Dorsolateral prefrontal cortex (tissue), 120 donors: ENCODE measurements at regions of chr5 and their contacts with region 1.

Region 1: GRCh38 chr5:128905571-128906110 is 59.6 kb upstream of the SLC27A6 start:
- DNase-seq: peak in 1 of 10 donors; percentile 19
- H3K4me3 ChIP-seq: no peak overlapping the region
- H3K27ac ChIP-seq: no peak overlapping the region
- H3K27me3 ChIP-seq: peaks cover 0 to 9% (median 0%) of the 10 kb centered on the region in 45 donors
- CTCF ChIP-seq: peak; percentile 65 to 96 (median 83)

Region 2: GRCh38 chr5:129053438-129053837 is 147.8 kb after region 1 on chr5:
- intact Hi-C with region 1: loop called in 1 of 2 experiments (anchors 10 kb)
- DNase-seq: no peak
- H3K4me3 ChIP-seq: no peak overlapping the region
- H3K27ac ChIP-seq: no peak overlapping the region
- H3K27me3 ChIP-seq: peaks cover 0 to 3% (median 0%) of the 10 kb centered on the region in 45 donors
- CTCF ChIP-seq: peak in 42 of 56 donors; percentile 18 to 74 (median 38)

Region 3: GRCh38 chr5:129094087-129094923 is 188.7 kb after region 1 on chr5 and contains the start of gene ISOC1:
- intact Hi-C with region 1: loop called in 1 of 2 experiments (anchors 5 kb)
- DNase-seq: peak; percentile 47 to 93 (median 83)
- H3K4me3 ChIP-seq: peak within 1 kb of the TSS; percentile 62 to 99 (median 86)
- H3K27ac ChIP-seq: peak within 1 kb of the TSS in 56 of 59 donors; percentile 24 to 91 (median 79)
- H3K27me3 ChIP-seq: no peaks in the 10 kb centered on the region
- CTCF ChIP-seq: peak in 29 of 56 donors; percentile 3 to 62 (median 24)
- total RNA-seq, gene ISOC1: 5.2 to 18.9 (median 12.0) TPM